ENCODE measurements at regions of chr4 and their contacts with region 1.

Region 1: DNA sequence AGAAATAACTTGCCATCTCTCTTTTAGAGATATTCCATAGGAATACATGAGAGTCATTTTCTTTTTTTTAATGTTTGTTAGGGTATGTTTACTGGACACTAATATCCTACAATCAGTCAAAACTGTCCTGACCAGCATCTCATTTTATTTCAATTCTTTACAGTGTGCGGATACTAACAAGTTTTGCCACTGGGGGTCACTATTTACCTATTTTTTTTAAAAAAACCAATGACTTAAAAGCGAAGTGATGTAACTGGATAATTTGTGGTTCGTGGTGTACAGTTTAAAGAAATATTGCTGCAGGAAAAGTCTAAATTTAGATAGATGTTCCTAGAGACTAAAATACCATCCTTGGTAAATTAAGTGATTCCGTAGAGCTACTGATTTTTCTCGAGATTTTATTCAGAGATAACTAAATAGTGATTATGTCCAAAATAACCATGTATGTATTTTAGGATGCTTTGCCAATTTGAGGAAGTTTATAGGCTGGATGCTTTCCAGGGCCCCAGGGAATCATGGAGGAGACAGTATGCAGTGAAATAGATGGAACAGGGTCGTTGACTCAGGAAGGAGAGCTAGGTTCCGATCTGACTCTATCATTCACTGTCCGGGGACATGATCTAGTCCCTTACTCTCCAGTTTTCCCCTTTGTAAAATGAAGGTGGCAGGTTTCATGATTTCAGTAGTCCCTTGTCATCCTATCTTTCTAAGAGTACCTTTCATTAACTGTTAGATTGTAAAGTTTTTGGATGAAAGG is 34.0 kb upstream of the GNPDA2 start:
- DNase-seq: no peak
- ATAC-seq: peak; percentile 48

Region 2: DNA sequence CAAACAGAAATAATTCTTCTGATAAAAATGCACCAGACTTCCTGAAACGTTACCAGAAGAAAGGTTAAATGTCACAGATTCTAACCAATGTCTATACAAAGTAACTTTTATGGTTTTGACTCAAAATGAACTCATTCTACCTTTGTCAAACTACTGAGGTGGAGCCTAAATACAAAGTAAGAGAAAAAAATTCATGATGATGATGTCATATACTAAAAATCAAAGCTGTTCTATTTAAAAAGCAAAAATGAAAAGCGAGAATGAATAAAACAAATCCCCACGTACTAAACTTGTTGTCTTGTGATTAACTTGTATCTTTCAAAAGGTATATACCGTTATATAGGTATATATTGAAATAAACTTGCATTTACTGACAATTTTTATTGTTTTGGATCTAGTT is 55.6 kb before region 1 on chr4:
- intact Hi-C with region 1: no loop called
- DNase-seq: no peak
- ATAC-seq: no peak

Region 3: DNA sequence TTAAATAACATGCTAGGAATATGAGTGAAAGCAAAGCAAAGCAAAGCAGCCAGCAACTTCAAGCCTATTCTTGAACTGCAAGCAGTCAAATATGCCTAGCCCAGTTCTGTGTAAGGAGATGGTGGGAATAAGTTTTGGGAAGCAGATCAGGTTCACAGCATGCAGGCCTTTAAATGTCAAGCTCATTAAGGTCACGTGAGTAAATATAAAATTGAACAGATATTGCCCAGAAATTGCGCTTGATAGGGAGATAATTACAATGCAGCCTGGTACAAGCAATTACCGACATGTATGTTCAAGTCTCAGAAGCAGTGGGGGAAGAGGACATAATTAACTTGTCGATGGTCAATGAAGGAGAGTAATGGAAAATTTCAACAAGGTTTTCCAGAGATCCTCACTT is 39.9 kb before region 1 on chr4:
- intact Hi-C with region 1: no loop called
- DNase-seq: no peak
- ATAC-seq: no peak

Region 4: GRCh38 chr4:44848466-44848865 is 88.1 kb after region 1 on chr4:
- intact Hi-C with region 1: loop called (anchors 10 kb)
- DNase-seq: no peak
- ATAC-seq: no peak

Region 5: GRCh38 chr4:45120163-45120562 is 359.8 kb after region 1 on chr4:
- intact Hi-C with region 1: loop called (anchors 10 kb)
- DNase-seq: no peak
- ATAC-seq: peak; percentile 91

Region 6: DNA sequence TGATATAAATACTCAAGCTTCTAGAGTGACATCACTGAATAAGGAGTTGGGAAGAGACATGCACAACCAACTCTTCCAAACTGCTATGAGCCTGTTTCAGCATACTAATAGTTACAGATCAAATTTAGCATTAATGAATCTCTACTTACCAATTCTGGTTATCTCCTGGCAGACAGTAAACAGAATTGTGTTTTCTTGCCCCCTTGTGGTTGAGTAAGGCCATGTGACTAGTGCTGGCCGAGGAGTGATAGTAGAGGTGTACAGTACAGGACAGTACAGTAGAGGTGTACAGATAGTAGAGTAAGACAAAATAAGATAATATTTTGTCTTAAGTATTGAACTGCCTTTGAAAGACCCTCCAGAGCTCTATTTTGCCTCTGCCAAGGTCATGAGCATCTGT is 682.1 kb after region 1 on chr4:
- intact Hi-C with region 1: loop called (anchors 5 kb)
- DNase-seq: no peak
- ATAC-seq: peak; percentile 31

Region 7: DNA sequence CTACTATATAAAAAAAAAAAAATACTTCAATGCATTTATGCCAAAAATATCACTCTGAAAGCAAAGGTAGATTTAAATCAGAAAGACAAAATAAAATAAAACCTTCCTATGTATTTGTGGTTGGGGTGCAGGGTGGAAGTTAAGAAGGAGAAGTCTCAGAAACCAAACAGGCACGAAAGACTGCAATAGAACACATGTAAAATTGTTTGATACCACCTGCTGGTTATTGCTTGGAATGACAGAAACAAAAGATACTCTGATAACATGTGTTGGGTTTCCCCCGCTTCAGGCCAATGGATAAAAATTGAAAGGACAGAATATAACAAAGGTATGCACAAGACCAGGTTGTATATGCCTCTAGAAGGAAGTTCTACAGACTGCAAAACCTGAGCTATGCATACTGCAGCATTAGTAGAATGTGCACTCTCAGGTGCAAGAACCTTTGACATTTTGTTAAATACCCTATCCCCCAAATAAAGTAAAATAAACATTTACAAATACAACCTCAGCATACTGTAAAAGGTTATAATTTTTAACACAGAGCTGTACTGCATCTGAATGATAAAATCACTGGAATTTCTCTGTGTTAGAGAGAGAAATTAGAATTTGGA is 1510.8 kb after region 1 on chr4:
- intact Hi-C with region 1: loop called (anchors 5 kb)
- DNase-seq: no peak
- ATAC-seq: no peak